B cell (primary cell): ENCODE measurements at regions of chr1 and their contacts with region 1.

Region 1: DNA sequence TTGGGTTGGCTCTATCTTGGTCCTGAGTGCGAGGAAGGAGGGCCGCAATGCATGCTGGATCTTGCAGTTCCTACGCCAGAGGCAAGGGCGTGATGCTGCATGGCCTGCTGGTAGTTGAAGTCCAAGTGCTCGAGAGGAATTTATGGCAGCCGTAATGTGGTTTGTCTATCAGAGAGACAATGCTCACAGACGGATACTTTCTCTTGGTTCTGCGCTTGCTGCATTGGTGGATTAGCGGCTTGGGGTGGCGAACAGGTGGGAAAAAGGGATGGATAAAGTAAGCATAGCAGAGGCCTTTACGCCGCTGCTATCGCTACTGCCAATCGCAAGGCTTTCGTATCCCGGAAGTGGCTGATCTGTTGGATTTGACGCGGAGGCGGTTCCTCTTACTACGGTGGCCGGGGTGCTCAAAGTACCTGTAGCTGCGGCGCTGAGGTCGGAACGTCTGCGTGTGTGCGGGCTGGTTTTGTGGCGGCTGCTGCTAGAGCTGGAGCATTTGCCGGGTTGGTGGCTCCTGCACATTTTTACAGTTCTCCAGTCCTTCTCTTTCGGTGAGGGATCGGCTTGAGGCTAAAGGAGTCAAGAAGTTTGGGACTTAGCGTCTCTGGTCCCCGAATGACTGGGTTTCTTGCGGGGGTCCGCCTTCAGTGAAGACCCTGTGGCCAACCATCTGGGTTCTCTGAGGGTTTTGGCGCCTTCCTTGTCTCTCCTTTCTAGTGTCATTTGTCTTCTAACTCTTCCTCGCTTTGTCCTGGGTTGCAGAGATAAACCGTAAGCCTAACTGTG is at the start of gene ATG4C:
- DNase-seq: peak; percentile 98
- ATAC-seq: peak; percentile 95
- H3K4me3 ChIP-seq: peak within 1 kb of the TSS; percentile 82 to 99 (median 91)
- H3K4me3 Mint-ChIP-seq: no peak within 1 kb of the TSS
- H3K27ac ChIP-seq: peak within 1 kb of the TSS; percentile 86 to 88
- H3K27ac Mint-ChIP-seq: no peak within 1 kb of the TSS
- H3K4me1 ChIP-seq: peaks cover 7 to 25% of the 10 kb centered on the region in 2 donors
- H3K4me1 Mint-ChIP-seq: peaks cover 18% of the 10 kb centered on the region
- H3K27me3 ChIP-seq: no peaks in the 10 kb centered on the region
- H3K27me3 Mint-ChIP-seq: peaks cover 3% of the 10 kb centered on the region
- CTCF ChIP-seq: no peak
- total RNA-seq, gene ATG4C: 23.5 and 30.8 TPM in 2 replicates

Region 2: DNA sequence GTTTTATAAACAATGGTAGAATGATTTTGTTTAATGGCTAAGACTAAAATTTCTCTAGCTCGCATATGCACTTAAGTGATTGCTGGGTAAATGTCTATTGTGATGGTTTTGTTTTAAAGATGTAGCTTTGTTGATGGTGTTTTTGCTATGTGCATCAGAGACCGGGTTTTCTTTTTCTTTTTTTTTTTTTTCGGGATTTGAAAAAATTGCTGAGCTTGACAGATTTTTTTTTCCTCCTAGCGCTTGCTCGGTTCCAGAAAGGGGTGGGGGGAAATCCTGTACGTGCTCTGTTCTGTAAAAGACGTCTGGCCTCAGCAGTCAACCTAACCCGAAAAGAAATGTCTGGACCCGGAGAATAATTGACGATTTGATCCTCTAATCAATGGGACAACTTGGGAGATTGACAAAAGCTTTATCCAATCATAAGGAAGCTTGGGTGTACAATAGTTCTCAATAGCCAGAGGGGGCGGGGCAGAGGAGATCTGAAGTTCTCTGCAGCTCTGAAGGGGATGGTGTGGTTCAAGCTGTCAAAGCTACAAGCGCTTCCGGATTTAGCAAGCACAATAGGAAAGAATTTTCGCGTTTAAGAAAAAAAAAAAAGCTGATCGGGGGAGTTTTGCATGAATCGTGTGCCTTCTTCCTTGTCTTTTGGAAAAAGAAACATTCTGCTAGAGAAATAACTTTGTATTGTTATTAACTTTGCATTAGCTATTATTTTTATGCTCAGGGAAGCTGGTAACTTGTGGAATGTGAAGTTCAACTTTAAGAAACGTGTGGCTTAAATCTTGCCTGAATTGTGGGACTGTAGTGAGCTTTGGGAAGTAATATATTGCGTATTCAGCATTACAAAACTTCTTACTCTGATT is 1706.0 kb before region 1 on chr1:
- CTCF ChIA-PET with region 1: no interaction called
- POLR2A ChIA-PET with region 1: no interaction called
- intact Hi-C with region 1: loop called (anchors 5 kb)
- DNase-seq: peak; percentile 91
- ATAC-seq: peak; percentile 42
- H3K4me3 ChIP-seq: peak overlapping the region; percentile 54 to 98 (median 67)
- H3K4me3 Mint-ChIP-seq: peak overlapping the region; percentile 92
- H3K27ac ChIP-seq: peak overlapping the region; percentile 71 to 83
- H3K27ac Mint-ChIP-seq: peak overlapping the region; percentile 75
- H3K4me1 ChIP-seq: peaks cover 33% of the 10 kb centered on the region in 2 donors
- H3K4me1 Mint-ChIP-seq: peaks cover 36% of the 10 kb centered on the region
- H3K27me3 ChIP-seq: peaks cover 0 to 40% (median 33%) of the 10 kb centered on the region in 4 experiments
- H3K27me3 Mint-ChIP-seq: peaks cover 35% of the 10 kb centered on the region
- CTCF ChIP-seq: no peak

Region 3: DNA sequence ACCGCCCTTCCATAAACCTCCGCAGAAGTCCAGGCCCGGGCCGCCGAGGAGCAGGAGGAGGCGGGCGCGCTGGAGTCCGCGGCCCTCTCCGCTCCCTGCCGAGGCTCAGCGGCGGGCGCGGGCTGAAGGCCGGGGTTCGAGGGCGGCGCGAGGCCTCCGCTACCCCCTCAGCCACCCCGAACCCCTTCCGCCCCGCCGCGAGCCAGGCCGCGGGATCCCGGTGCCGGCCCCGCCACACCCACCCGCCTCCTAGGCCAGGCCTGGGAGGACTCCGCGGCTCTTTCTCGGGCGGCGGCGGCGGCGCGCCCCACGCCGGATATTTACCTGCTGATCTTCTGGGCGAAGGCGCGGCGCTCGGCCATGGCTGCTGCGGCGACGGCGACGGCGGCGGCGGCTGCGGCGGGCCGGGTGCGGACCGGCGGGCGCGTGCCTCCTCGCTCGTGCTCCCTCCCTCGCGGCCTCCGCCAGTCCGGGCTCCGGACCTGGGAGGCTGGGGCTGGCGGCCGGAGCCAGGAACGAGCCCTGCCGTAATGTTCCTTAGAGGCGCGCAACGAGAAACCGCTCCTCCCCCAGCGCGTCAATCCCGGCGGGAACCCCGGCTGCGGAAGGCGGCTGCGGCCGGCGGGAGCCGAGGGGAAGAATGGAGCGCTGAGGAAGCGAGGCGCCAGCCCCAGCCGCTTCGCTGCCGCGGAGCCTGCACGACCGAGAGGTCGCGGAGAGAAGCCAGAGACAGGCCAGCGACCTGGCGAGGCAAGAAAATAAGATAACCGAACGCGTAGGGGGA is 95.8 kb before region 1 on chr1 and contains the start of gene DOCK7:
- CTCF ChIA-PET with region 1: no interaction called
- POLR2A ChIA-PET with region 1: no interaction called
- intact Hi-C with region 1: loop called (anchors 5 kb)
- DNase-seq: peak; percentile 75
- ATAC-seq: peak; percentile 70
- H3K4me3 ChIP-seq: peak within 1 kb of the TSS; percentile 77 to 82 (median 80)
- H3K4me3 Mint-ChIP-seq: peak within 1 kb of the TSS; percentile 97
- H3K27ac ChIP-seq: peak within 1 kb of the TSS in 1 of 2 donors; percentile 50
- H3K27ac Mint-ChIP-seq: peak within 1 kb of the TSS; percentile 93
- H3K4me1 ChIP-seq: peaks cover 0 to 9% of the 10 kb centered on the region in 2 donors
- H3K4me1 Mint-ChIP-seq: peaks cover 29% of the 10 kb centered on the region
- H3K27me3 ChIP-seq: no peaks in the 10 kb centered on the region
- H3K27me3 Mint-ChIP-seq: no peaks in the 10 kb centered on the region
- CTCF ChIP-seq: no peak
- total RNA-seq, gene DOCK7: 20.5 and 22.0 TPM in 2 replicates

Region 4: GRCh38 chr1:62800825-62801306 is 16.9 kb after region 1 on chr1:
- CTCF ChIA-PET with region 1: interaction called, 5 read pairs
- POLR2A ChIA-PET with region 1: interaction called, 4 read pairs
- intact Hi-C with region 1: loop called (anchors 1 kb)
- DNase-seq: peak; percentile 90
- ATAC-seq: peak; percentile 99
- H3K4me3 ChIP-seq: peak overlapping the region in 3 of 5 experiments; percentile 11 to 53 (median 19)
- H3K4me3 Mint-ChIP-seq: peak overlapping the region; percentile 84
- H3K27ac ChIP-seq: peak overlapping the region; percentile 70 to 83
- H3K27ac Mint-ChIP-seq: peak overlapping the region; percentile 96
- H3K4me1 ChIP-seq: peaks cover 36 to 52% of the 10 kb centered on the region in 2 donors
- H3K4me1 Mint-ChIP-seq: peaks cover 38% of the 10 kb centered on the region
- H3K27me3 ChIP-seq: no peaks in the 10 kb centered on the region
- H3K27me3 Mint-ChIP-seq: no peaks in the 10 kb centered on the region
- CTCF ChIP-seq: no peak

Region 5: DNA sequence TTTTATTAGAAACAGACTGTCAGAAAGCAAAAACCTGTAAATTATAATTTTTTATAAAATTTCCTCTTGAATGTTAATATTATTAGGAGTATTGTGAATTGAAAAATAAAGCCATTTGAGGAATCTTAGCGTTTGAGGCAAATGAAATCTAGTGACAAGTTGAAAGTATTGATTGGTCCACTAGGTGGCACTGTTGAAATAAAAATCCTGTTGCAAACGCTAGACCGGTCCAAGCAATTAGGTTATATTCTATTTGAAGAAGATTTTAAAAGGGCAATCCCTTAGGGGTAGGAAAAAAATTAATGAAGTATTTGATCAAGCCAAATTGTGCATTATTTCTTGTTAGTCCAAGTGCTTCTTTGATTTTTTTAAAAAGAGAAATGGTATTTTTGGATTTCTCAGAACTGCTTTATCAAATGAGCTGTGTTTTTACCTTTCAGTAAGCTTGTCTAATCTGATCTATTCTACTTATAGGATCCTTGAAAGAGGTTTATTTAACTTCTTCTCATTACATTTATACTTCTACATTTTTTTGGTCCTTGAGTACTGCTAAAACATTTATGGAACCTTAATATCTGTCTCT is 57.8 kb after region 1 on chr1:
- CTCF ChIA-PET with region 1: interaction called, 8 read pairs
- POLR2A ChIA-PET with region 1: interaction called, 3 read pairs
- intact Hi-C with region 1: loop called (anchors 2 kb)
- DNase-seq: peak; percentile 70
- ATAC-seq: peak; percentile 62
- H3K4me3 ChIP-seq: no peak overlapping the region
- H3K4me3 Mint-ChIP-seq: no peak overlapping the region
- H3K27ac ChIP-seq: no peak overlapping the region
- H3K27ac Mint-ChIP-seq: no peak overlapping the region
- H3K4me1 ChIP-seq: no peaks in the 10 kb centered on the region
- H3K4me1 Mint-ChIP-seq: peaks cover 2% of the 10 kb centered on the region
- H3K27me3 ChIP-seq: no peaks in the 10 kb centered on the region
- H3K27me3 Mint-ChIP-seq: no peaks in the 10 kb centered on the region
- CTCF ChIP-seq: peak; percentile 88

Region 6: GRCh38 chr1:63522891-63523728 is 739.2 kb after region 1 on chr1 and contains the starts of genes EFCAB7 and ITGB3BP:
- CTCF ChIA-PET with region 1: no interaction called
- POLR2A ChIA-PET with region 1: no interaction called
- intact Hi-C with region 1: loop called (anchors 5 kb)
- DNase-seq: peak; percentile 92
- ATAC-seq: peak; percentile 86
- H3K4me3 ChIP-seq: peak within 1 kb of the TSS; percentile 76 to 97 (median 88)
- H3K4me3 Mint-ChIP-seq: peak within 1 kb of the TSS; percentile 92
- H3K27ac ChIP-seq: peak within 1 kb of the TSS; percentile 88 to 91
- H3K27ac Mint-ChIP-seq: peak within 1 kb of the TSS; percentile 96
- H3K4me1 ChIP-seq: peaks cover 16 to 17% of the 10 kb centered on the region in 2 donors
- H3K4me1 Mint-ChIP-seq: peaks cover 26% of the 10 kb centered on the region
- H3K27me3 ChIP-seq: no peaks in the 10 kb centered on the region
- H3K27me3 Mint-ChIP-seq: no peaks in the 10 kb centered on the region
- CTCF ChIP-seq: no peak
- total RNA-seq, gene EFCAB7: 11.2 and 14.7 TPM in 2 replicates
- total RNA-seq, gene ITGB3BP: 30.3 and 37.4 TPM in 2 replicates